ENCODE measurements at regions of chr12 and their contacts with region 1.

Region 1: DNA sequence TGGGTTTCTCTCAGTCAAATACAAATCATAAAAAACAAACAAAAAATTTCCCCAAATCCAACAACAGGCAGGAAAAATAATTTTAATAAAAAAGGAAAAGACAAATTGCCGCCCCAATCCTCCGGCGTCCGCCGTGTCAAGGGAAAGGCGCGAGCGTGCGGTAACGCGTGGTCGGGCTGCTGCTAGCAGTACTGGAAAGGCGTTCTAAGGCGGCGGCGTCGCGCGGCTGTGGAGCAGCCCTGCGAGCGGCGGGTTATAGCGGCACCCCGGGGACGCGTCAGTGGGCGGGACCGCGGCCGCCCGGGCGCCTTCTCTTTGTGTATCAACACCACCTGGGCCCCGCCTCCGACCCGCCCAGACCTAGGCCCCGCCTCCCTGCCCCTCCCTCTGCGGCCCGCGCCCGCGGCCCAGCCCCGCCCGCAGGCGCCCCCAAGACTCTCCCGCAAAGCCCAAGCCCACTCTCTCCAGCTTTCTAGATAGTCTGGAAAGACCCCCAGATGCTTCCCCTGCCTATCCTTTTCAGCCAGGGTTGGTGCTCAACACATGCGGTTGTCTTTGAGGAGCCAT is at the start of gene SLC38A2:
- DNase-seq: peak; percentile 99
- H3K4me3 ChIP-seq: peak within 1 kb of the TSS; percentile 64 to 98 (median 90)
- H3K27ac ChIP-seq: peak within 1 kb of the TSS; percentile 95 to 99 (median 98)
- H3K4me1 ChIP-seq: peaks cover 0 to 41% (median 34%) of the 10 kb centered on the region in 4 donors
- H3K27me3 ChIP-seq: no peaks in the 10 kb centered on the region
- CTCF ChIP-seq: no peak
- EP300 ChIP-seq: no peak
- POLR2A ChIP-seq: peak; percentile 100
- total RNA-seq, gene SLC38A2: 234 to 299 (median 263) TPM

Region 2: GRCh38 chr12:45215419-45216229 is 1157.0 kb before region 1 on chr12 and contains the start of gene ANO6:
- intact Hi-C with region 1: loop called (anchors 10 kb)
- DNase-seq: peak; percentile 96
- H3K4me3 ChIP-seq: peak within 1 kb of the TSS; percentile 67 to 91 (median 80)
- H3K27ac ChIP-seq: peak within 1 kb of the TSS; percentile 93 to 97 (median 96)
- H3K4me1 ChIP-seq: peaks cover 0 to 43% (median 27%) of the 10 kb centered on the region in 4 donors
- H3K27me3 ChIP-seq: no peaks in the 10 kb centered on the region
- CTCF ChIP-seq: peak in 1 of 4 experiments; percentile 5
- EP300 ChIP-seq: no peak
- POLR2A ChIP-seq: peak; percentile 81 to 92
- total RNA-seq, gene ANO6: 98.5 to 107 (median 103) TPM

Region 3: GRCh38 chr12:46124848-46125619 is 247.6 kb before region 1 on chr12:
- intact Hi-C with region 1: loop called (anchors 2 kb)
- DNase-seq: peak; percentile 75
- H3K4me3 ChIP-seq: peak overlapping the region in 3 of 4 donors; percentile 24 to 34 (median 31)
- H3K27ac ChIP-seq: peak overlapping the region; percentile 8 to 54 (median 44)
- H3K4me1 ChIP-seq: peaks cover 0 to 22% (median 20%) of the 10 kb centered on the region in 4 donors
- H3K27me3 ChIP-seq: no peaks in the 10 kb centered on the region
- CTCF ChIP-seq: peak; percentile 61 to 86 (median 75)
- EP300 ChIP-seq: no peak
- POLR2A ChIP-seq: no peak

Region 4: GRCh38 chr12:46209914-46210872 is 162.4 kb before region 1 on chr12:
- intact Hi-C with region 1: loop called (anchors 5 kb)
- DNase-seq: peak; percentile 72
- H3K4me3 ChIP-seq: no peak overlapping the region
- H3K27ac ChIP-seq: peak overlapping the region; percentile 73 to 79 (median 76)
- H3K4me1 ChIP-seq: peaks cover 0 to 100% (median 77%) of the 10 kb centered on the region in 4 donors
- H3K27me3 ChIP-seq: no peaks in the 10 kb centered on the region
- CTCF ChIP-seq: no peak
- EP300 ChIP-seq: peak in 1 of 4 donors; percentile 8
- POLR2A ChIP-seq: no peak

Region 5: GRCh38 chr12:46268590-46269558 is 103.8 kb before region 1 on chr12 and contains the start of gene SLC38A1:
- intact Hi-C with region 1: loop called (anchors 5 kb)
- DNase-seq: peak; percentile 97
- H3K4me3 ChIP-seq: peak within 1 kb of the TSS; percentile 64 to 80 (median 74)
- H3K27ac ChIP-seq: peak within 1 kb of the TSS; percentile 89 to 93 (median 92)
- H3K4me1 ChIP-seq: peaks cover 0 to 40% (median 31%) of the 10 kb centered on the region in 4 donors
- H3K27me3 ChIP-seq: no peaks in the 10 kb centered on the region
- CTCF ChIP-seq: no peak
- EP300 ChIP-seq: peak in 1 of 4 donors; percentile 36
- POLR2A ChIP-seq: peak; percentile 80 to 87
- total RNA-seq, gene SLC38A1: 149 to 209 (median 177) TPM

Region 6: DNA sequence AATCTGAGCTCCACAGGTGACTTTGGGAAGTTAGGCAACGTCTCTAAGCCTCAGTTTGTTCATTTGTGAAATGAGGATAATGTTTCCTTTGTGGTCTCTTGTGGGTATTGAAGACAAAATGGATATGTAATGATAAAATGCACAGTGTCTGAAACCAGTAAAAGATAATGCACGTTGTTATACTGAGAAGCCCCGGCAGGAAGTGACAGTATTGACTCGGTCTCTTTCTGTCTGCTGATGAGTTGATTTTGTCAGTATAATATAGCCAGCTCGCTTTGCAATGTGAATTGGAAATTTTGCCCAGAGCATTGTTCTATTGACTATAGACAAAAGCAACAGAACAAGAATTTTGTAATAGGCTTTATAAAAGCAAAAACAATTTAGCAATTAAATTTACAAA is 54.6 kb before region 1 on chr12:
- intact Hi-C with region 1: no loop called
- DNase-seq: no peak
- H3K4me3 ChIP-seq: no peak overlapping the region
- H3K27ac ChIP-seq: no peak overlapping the region
- H3K4me1 ChIP-seq: no peaks in the 10 kb centered on the region
- H3K27me3 ChIP-seq: no peaks in the 10 kb centered on the region
- CTCF ChIP-seq: no peak
- EP300 ChIP-seq: no peak
- POLR2A ChIP-seq: no peak

Region 7: GRCh38 chr12:46546634-46547286 is 174.1 kb after region 1 on chr12:
- intact Hi-C with region 1: no loop called
- DNase-seq: no peak
- H3K4me3 ChIP-seq: no peak overlapping the region
- H3K27ac ChIP-seq: no peak overlapping the region
- H3K4me1 ChIP-seq: no peaks in the 10 kb centered on the region
- H3K27me3 ChIP-seq: no peaks in the 10 kb centered on the region
- CTCF ChIP-seq: no peak
- EP300 ChIP-seq: no peak
- POLR2A ChIP-seq: no peak

Region 8: GRCh38 chr12:46562625-46563228 is 190.1 kb after region 1 on chr12:
- intact Hi-C with region 1: loop called (anchors 5 kb)
- DNase-seq: no peak
- H3K4me3 ChIP-seq: no peak overlapping the region
- H3K27ac ChIP-seq: peak overlapping the region in 3 of 4 donors; percentile 24 to 61 (median 52)
- H3K4me1 ChIP-seq: peaks cover 0 to 43% (median 32%) of the 10 kb centered on the region in 4 donors
- H3K27me3 ChIP-seq: no peaks in the 10 kb centered on the region
- CTCF ChIP-seq: no peak
- EP300 ChIP-seq: peak in 2 of 4 donors; percentile 42 to 43
- POLR2A ChIP-seq: no peak

Measured in sigmoid colon (tissue), 7 donors.